Caco-2 (cell line): ENCODE measurements at regions of chr6 and their contacts with region 1.

Region 1: GRCh38 chr6:70955441-70956190 is 1.2 kb downstream of the B3GAT2 start:
- DNase-seq: peak; percentile 74 to 91
- H3K4me3 ChIP-seq: peak overlapping the region; percentile 50
- H3K4me3 Mint-ChIP-seq: peak overlapping the region; percentile 68
- H3K27ac Mint-ChIP-seq: no peak overlapping the region
- H3K4me1 ChIP-seq: no peaks in the 10 kb centered on the region
- H3K4me1 Mint-ChIP-seq: no peaks in the 10 kb centered on the region
- H3K27me3 ChIP-seq: no peaks in the 10 kb centered on the region
- H3K27me3 Mint-ChIP-seq: peaks cover 17% of the 10 kb centered on the region
- CTCF ChIP-seq: peak; percentile 83 to 90

Region 2: DNA sequence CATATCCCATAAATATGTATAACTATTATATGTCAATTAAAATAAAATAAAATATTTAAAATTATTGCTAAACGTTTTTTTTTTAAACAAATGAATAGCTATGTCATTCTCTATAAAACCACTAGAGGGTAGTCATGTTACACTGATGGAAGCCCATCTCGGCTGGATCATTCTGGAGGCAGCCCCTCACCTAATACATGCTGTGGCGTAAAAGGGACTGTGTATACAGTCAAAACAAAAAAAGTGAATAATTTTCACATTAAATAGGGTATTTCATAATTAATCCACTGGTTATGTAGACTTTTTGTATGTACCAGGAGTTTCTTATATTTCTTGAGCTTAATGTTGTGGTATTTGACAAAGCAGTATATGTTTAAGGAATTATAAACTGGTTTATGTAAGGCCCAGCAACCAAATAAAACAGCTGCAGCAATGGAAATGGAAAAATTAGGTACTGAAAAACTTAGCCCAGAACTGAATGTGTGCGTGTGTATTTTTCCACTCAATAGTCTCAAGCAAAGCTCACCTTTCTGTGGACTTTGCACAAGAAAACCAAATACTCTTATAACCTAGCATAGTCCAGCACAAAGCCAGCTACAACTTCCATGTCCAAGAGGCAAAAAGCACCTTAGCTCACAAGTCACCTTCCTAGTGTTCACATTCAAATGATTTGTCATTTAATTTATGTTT is 734.4 kb before region 1 on chr6:
- CTCF ChIA-PET with region 1: interaction called, 6 read pairs
- POLR2A ChIA-PET with region 1: no interaction called
- intact Hi-C with region 1: loop called (anchors 5 kb)
- DNase-seq: peak in 1 of 2 experiments; percentile 19
- H3K4me3 ChIP-seq: no peak overlapping the region
- H3K4me3 Mint-ChIP-seq: no peak overlapping the region
- H3K27ac Mint-ChIP-seq: no peak overlapping the region
- H3K4me1 ChIP-seq: no peaks in the 10 kb centered on the region
- H3K4me1 Mint-ChIP-seq: no peaks in the 10 kb centered on the region
- H3K27me3 ChIP-seq: no peaks in the 10 kb centered on the region
- H3K27me3 Mint-ChIP-seq: peaks cover 4% of the 10 kb centered on the region
- CTCF ChIP-seq: peak; percentile 60 to 74

Region 3: GRCh38 chr6:70520575-70520974 is 435.0 kb before region 1 on chr6:
- CTCF ChIA-PET with region 1: interaction called, 19 read pairs
- POLR2A ChIA-PET with region 1: no interaction called
- intact Hi-C with region 1: loop called (anchors 2 kb)
- DNase-seq: no peak
- H3K4me3 ChIP-seq: no peak overlapping the region
- H3K4me3 Mint-ChIP-seq: no peak overlapping the region
- H3K27ac Mint-ChIP-seq: no peak overlapping the region
- H3K4me1 ChIP-seq: no peaks in the 10 kb centered on the region
- H3K4me1 Mint-ChIP-seq: no peaks in the 10 kb centered on the region
- H3K27me3 ChIP-seq: no peaks in the 10 kb centered on the region
- H3K27me3 Mint-ChIP-seq: no peaks in the 10 kb centered on the region
- CTCF ChIP-seq: peak; percentile 23 to 33

Region 4: GRCh38 chr6:70706491-70707123 is 249.0 kb before region 1 on chr6:
- CTCF ChIA-PET with region 1: interaction called, 3 read pairs
- POLR2A ChIA-PET with region 1: no interaction called
- intact Hi-C with region 1: loop called (anchors 2 kb)
- DNase-seq: peak in 1 of 2 experiments; percentile 23
- H3K4me3 ChIP-seq: no peak overlapping the region
- H3K4me3 Mint-ChIP-seq: no peak overlapping the region
- H3K27ac Mint-ChIP-seq: no peak overlapping the region
- H3K4me1 ChIP-seq: no peaks in the 10 kb centered on the region
- H3K4me1 Mint-ChIP-seq: peaks cover 6% of the 10 kb centered on the region
- H3K27me3 ChIP-seq: no peaks in the 10 kb centered on the region
- H3K27me3 Mint-ChIP-seq: no peaks in the 10 kb centered on the region
- CTCF ChIP-seq: peak; percentile 25 to 53

Region 5: GRCh38 chr6:70967049-70967448 is 11.4 kb after region 1 on chr6:
- CTCF ChIA-PET with region 1: interaction called, 3 read pairs
- POLR2A ChIA-PET with region 1: no interaction called
- intact Hi-C with region 1: loop called (anchors 1 kb)
- DNase-seq: no peak
- H3K4me3 ChIP-seq: no peak overlapping the region
- H3K4me3 Mint-ChIP-seq: no peak overlapping the region
- H3K27ac Mint-ChIP-seq: no peak overlapping the region
- H3K4me1 ChIP-seq: no peaks in the 10 kb centered on the region
- H3K4me1 Mint-ChIP-seq: no peaks in the 10 kb centered on the region
- H3K27me3 ChIP-seq: no peaks in the 10 kb centered on the region
- H3K27me3 Mint-ChIP-seq: no peaks in the 10 kb centered on the region
- CTCF ChIP-seq: no peak